ENCODE measurements at regions of chr15 and their contacts with region 1.

Region 1: GRCh38 chr15:99014803-99015676 is 7.4 kb upstream of the PGPEP1L start:
- DNase-seq: peak; percentile 85
- H3K4me3 ChIP-seq: peak overlapping the region; percentile 58 to 77 (median 60)
- H3K27ac ChIP-seq: peak overlapping the region; percentile 29
- H3K4me1 ChIP-seq: peaks cover 14% of the 10 kb centered on the region
- H3K27me3 ChIP-seq: no peaks in the 10 kb centered on the region
- CTCF ChIP-seq: no peak

Region 2: GRCh38 chr15:98909968-98910885 is 104.8 kb before region 1 on chr15:
- CTCF ChIA-PET with region 1: interaction called, 10 read pairs
- dilution Hi-C with region 1: no loop called
- in situ Hi-C with region 1: no loop called
- intact Hi-C with region 1: no loop called
- DNase-seq: no peak
- H3K4me3 ChIP-seq: no peak overlapping the region
- H3K27ac ChIP-seq: no peak overlapping the region
- H3K4me1 ChIP-seq: peaks cover 29% of the 10 kb centered on the region
- H3K27me3 ChIP-seq: no peaks in the 10 kb centered on the region
- CTCF ChIP-seq: no peak

Region 3: GRCh38 chr15:99033691-99034090 is 18.7 kb after region 1 on chr15:
- CTCF ChIA-PET with region 1: no interaction called
- dilution Hi-C with region 1: no loop called
- in situ Hi-C with region 1: no loop called
- intact Hi-C with region 1: loop called (anchors 2 kb)
- DNase-seq: no peak
- H3K4me3 ChIP-seq: no peak overlapping the region
- H3K27ac ChIP-seq: no peak overlapping the region
- H3K4me1 ChIP-seq: peaks cover 11% of the 10 kb centered on the region
- H3K27me3 ChIP-seq: peaks cover 2% of the 10 kb centered on the region
- CTCF ChIP-seq: no peak

Region 4: GRCh38 chr15:99662903-99663302 is 647.9 kb after region 1 on chr15:
- CTCF ChIA-PET with region 1: no interaction called
- dilution Hi-C with region 1: no loop called
- in situ Hi-C with region 1: no loop called
- intact Hi-C with region 1: no loop called
- DNase-seq: no peak
- H3K4me3 ChIP-seq: no peak overlapping the region
- H3K27ac ChIP-seq: no peak overlapping the region
- H3K4me1 ChIP-seq: no peaks in the 10 kb centered on the region
- H3K27me3 ChIP-seq: no peaks in the 10 kb centered on the region
- CTCF ChIP-seq: no peak

Measured in mammary epithelial cell (primary cell).